Transverse colon (tissue), 4 donors: ENCODE measurements at regions of chr9 and their contacts with region 1.

Region 1: DNA sequence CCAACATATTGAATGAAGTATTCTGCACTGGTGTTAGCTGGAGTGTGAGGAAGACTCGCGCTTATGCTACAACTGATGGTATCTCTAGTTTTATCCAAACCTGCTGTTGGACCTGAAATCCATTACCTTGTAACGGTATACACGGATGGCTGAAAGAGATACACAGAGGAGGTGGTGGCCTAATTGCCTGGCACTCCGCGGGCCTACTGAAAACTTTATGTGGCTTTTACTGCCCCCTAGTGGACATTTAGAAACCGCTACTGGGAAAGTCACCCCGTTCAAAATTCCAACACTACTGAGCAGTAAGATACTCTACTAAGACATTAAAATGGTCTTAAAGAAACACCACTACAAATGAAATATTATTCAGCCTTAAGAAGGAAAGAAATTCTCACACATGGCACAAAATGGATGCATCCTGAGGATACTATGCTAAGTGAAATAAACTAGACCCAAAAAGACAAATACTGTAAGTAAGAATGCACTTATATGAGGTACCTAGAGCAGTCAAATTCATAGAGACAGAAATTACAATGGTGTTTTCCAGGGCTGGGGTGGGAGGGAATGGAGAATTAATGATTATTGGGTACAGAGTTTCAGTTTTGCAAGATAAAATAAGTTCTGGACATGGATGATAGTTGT is 100.4 kb downstream of the TTLL11 start:
- DNase-seq: peak; percentile 47
- H3K4me3 ChIP-seq: no peak overlapping the region
- H3K27ac ChIP-seq: no peak overlapping the region
- H3K4me1 ChIP-seq: peaks cover 0 to 2% (median 0%) of the 10 kb centered on the region in 4 donors
- H3K27me3 ChIP-seq: no peaks in the 10 kb centered on the region
- CTCF ChIP-seq: peak; percentile 80 to 89 (median 84)
- EP300 ChIP-seq: no peak
- POLR2A ChIP-seq: no peak

Region 2: DNA sequence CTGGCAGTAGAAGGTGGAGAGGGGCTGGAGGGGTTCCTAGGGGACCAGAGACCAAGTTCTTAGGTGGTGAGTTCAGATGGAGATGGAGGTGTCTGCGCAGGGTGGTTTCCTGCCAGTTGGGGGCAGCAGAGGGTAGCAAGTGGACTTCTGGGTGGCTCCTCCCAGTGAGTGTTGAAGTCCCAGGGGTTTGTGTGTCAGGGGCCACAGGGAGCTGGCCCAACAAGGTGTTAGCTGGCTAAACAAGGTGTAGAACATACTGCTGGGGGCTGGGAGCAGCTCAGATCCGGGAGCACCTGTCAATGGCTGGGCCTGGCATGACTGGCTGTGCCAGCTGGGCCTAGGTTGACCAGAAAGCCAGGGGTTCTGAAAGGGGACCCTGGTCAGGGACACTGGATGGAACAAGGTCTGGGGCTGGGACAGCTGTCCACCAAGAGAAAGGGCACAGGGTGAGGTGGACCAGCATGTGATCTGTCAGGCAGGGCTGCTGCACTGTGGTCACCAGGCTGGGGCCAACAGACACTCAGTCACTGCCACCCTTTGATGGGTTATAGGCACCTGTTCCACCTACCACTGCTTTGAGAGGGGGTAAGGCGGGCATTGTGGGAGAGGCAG is 305.7 kb before region 1 on chr9:
- in situ Hi-C with region 1: loop called (anchors 5 to 25 kb)
- intact Hi-C with region 1: loop called (anchors 5 kb)
- DNase-seq: peak; percentile 86
- H3K4me3 ChIP-seq: no peak overlapping the region
- H3K27ac ChIP-seq: peak overlapping the region in 3 of 4 donors; percentile 20 to 47 (median 38)
- H3K4me1 ChIP-seq: peaks cover 2 to 26% (median 22%) of the 10 kb centered on the region in 4 donors
- H3K27me3 ChIP-seq: no peaks in the 10 kb centered on the region
- CTCF ChIP-seq: peak; percentile 80 to 90 (median 86)
- EP300 ChIP-seq: no peak
- POLR2A ChIP-seq: no peak

Region 3: DNA sequence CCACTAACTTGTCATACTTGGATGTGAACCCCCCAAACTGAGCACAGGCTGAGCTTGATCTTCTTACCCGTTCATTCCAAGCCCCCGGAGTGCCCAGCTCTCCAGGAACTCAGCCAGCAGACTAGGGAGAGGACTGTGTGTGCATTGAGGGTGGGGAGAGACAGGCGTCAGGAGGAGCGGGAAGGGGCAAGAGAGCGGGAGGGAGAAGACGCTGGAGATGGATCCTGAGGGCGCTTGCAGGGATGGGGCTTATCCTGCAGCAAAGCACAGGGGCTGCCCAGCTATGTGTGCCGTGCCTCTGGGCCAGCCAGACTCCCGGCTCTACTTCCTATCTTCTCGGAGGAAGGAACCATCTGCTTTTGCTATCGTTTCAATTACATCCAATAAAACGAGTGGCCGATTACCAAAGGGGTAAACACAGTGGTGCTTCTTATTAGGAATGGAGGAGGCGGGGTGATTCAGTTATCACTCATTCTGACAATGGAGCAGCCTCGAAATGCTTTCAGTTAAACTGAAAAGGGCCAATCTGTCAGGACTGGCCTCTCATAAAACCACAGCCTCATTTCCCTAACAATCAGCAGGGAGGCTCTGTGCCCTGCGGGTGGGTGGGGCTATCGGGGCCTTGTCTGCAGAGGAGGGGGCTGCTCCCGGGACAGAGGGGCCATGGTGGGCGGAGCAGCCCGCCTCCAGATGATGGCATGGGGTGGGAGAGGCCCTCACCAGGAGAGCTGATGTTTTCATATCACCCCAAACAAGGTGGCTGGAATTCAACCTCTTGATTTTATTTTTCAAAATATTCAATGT is 173.1 kb before region 1 on chr9:
- in situ Hi-C with region 1: loop called in 1 of 4 experiments (anchors 25 kb)
- intact Hi-C with region 1: no loop called
- DNase-seq: no peak
- H3K4me3 ChIP-seq: no peak overlapping the region
- H3K27ac ChIP-seq: no peak overlapping the region
- H3K4me1 ChIP-seq: peaks cover 0 to 9% (median 0%) of the 10 kb centered on the region in 4 donors
- H3K27me3 ChIP-seq: no peaks in the 10 kb centered on the region
- CTCF ChIP-seq: no peak
- EP300 ChIP-seq: no peak
- POLR2A ChIP-seq: no peak